ENCODE measurements at regions of chr7 and their contacts with region 1.

Region 1: DNA sequence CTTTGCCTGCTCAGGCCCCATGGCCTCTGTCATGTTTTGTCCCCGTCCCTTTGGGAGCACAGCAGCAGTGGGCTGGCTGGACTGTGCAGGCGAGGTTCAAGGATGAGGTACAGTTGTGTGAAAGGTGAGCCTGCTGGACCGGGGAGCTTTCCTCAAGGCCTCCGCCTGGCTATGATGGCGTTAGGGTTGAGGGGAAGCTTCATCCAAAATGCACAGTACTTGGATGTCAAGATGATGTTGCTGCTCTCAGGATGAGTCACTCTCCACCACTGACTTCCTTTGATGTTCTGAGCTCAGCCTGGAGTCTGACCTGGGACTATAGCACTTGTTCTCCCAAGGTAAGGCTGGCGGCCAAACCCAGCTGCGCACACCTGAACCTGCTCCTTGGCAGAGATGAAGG is 152.8 kb upstream of the SHH start:
- DNase-seq: no peak
- H3K4me3 ChIP-seq: no peak overlapping the region
- CTCF ChIP-seq: no peak

Region 2: DNA sequence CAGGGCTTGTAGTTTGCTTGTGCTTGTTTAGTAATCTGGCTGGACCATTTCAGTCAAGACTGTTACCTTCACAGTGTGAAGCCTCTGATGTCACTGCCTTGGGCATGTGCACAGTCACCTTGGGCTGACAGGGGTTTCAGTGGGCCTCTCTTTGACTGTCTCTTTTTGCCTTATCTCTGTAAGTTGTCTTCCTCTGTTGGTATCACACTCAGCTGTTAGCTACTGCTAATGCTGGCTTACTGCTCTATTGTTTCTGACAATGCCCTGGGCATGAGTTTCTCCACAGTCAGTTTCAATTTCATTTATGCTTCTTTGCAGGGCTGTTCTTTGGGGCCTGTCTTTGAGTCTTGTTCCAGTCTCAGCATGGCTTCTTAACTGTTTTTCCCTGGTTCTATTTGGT is 49.2 kb after region 1 on chr7:
- in situ Hi-C with region 1: loop called (anchors 5 kb)
- DNase-seq: no peak
- H3K4me3 ChIP-seq: no peak overlapping the region
- CTCF ChIP-seq: no peak